Activated CD4-positive, alpha-beta T cell treated with anti-CD3 and anti-CD28 coated beads for 36 hours (primary cell): ENCODE measurements at regions of chrX and their contacts with region 1.

Region 1: DNA sequence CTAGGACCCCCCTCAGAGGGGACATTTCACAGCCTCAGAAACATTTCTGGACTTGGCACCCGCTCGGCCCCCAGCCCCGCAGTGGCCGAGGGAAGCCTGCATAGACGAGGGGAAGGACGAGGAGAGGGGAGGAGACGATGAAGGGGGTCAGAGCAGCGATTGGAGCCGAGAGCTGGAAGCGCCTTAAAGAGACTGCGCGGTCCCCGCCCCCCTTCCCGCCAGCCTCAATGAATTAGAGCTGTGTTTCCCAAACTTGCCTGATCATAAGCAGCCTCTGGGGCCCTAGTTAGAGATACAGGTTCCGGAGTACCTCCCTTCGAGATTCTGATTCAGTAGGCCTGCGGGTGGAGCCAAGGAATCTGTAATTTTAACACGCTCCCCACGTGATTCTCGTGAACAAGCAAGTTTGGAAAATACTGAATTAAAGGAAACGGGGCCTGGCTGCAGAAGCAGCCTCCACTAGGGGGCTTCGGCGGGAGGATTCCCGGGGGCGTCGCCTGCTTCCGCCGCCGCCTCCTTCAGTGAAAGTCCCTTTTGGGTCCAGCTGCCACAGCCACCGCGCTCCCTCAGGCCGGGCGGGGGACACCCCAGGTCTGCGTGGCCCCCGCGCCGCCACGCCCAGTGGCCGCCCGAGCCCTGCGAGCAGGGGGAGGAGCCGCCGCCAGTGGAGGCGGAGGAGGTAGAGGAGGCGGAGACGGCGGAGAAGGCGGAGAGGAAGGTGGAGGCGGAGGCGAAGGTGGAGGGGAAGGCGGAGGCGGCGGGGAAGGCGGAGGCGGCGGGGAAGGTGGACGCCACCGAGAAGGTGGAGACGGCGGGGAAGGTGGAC is at the start of gene USP27X:
- DNase-seq: peak; percentile 79
- ATAC-seq: peak; percentile 83
- H3K4me3 Mint-ChIP-seq: peak within 1 kb of the TSS; percentile 74
- H3K27ac Mint-ChIP-seq: peak within 1 kb of the TSS; percentile 76
- H3K4me1 Mint-ChIP-seq: peaks cover 28% of the 10 kb centered on the region
- H3K27me3 Mint-ChIP-seq: no peaks in the 10 kb centered on the region
- total RNA-seq, gene USP27X: 2.2 TPM

Region 2: DNA sequence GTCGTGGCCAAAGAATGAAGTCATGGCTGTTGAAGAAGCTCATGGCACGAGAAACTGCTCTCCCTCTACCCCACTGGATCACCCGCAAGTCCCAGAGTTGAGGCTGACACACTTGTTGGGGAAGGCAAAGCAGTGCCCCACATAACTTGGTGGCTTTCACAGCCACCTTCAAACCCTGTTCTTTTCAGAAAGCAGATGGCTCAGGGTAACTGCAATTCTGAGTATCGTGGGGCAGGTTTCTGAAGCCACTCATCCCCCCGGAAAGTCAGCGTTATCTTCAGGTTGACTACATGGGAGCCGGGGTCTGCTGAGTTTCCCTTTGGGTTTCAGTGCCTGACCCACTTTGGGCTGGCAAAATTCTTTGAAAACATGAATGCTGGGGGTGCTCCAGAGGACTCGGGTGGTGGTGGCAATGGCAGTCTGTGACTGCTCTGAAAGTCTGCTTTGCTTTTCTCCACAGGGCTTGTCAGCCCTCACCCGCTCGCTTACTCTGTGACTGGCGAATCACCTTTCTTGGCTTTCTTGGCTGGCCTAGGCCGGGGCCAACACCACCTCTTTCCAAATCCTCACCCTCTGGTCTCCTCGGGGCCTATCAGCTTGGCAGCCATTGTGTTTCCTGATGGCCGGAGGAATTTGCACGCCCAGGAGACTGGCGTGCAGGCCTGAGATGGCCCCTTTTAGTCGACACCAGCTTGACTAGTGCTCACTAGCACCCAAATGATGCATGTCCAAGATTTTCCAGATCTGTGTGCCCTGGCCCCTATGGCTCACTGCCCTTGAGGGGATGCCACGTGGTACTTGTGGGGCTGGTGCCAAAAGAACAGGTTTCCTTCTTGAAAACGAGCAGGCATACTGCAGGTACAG is 602.1 kb before region 1 on chrX:
- CTCF ChIA-PET with region 1: no interaction called
- POLR2A ChIA-PET with region 1: no interaction called
- intact Hi-C with region 1: loop called in 1 of 2 experiments (anchors 5 kb)
- DNase-seq: peak; percentile 61
- ATAC-seq: peak; percentile 36
- H3K4me3 Mint-ChIP-seq: peak overlapping the region; percentile 47
- H3K27ac Mint-ChIP-seq: peak overlapping the region; percentile 94
- H3K4me1 Mint-ChIP-seq: peaks cover 80% of the 10 kb centered on the region
- H3K27me3 Mint-ChIP-seq: no peaks in the 10 kb centered on the region

Region 3: GRCh38 chrX:49761481-49761880 is 117.6 kb before region 1 on chrX:
- CTCF ChIA-PET with region 1: interaction called, 3 read pairs
- POLR2A ChIA-PET with region 1: no interaction called
- intact Hi-C with region 1: loop called in 1 of 2 experiments (anchors 1 kb)
- DNase-seq: peak; percentile 4
- ATAC-seq: no peak
- H3K4me3 Mint-ChIP-seq: no peak overlapping the region
- H3K27ac Mint-ChIP-seq: no peak overlapping the region
- H3K4me1 Mint-ChIP-seq: no peaks in the 10 kb centered on the region
- H3K27me3 Mint-ChIP-seq: no peaks in the 10 kb centered on the region

Region 4: GRCh38 chrX:49840679-49841078 is 38.4 kb before region 1 on chrX:
- CTCF ChIA-PET with region 1: interaction called, 5 read pairs
- POLR2A ChIA-PET with region 1: no interaction called
- intact Hi-C with region 1: loop called (anchors 1 to 2 kb)
- DNase-seq: peak; percentile 77
- ATAC-seq: peak; percentile 81
- H3K4me3 Mint-ChIP-seq: no peak overlapping the region
- H3K27ac Mint-ChIP-seq: no peak overlapping the region
- H3K4me1 Mint-ChIP-seq: peaks cover 5% of the 10 kb centered on the region
- H3K27me3 Mint-ChIP-seq: no peaks in the 10 kb centered on the region

Region 5: DNA sequence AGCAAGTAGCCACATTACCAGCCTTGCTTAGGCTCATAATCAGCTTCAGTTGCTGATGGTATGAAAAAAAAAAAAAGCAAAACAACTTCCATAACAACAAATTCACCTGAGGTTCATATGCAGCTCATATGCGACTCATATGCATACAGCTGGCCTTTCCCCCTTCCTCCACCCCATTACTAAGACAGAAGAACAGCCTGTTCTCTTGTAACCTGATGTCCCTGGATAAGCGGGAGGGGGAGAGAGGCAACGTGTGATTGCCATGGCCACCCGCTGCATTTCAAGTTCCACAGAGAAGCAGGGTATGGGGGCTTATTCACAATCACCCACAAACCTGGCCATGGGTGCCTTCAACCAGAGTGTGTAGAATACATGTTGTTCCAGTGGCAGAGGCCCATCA is 686.7 kb after region 1 on chrX:
- CTCF ChIA-PET with region 1: no interaction called
- POLR2A ChIA-PET with region 1: no interaction called
- intact Hi-C with region 1: no loop called
- DNase-seq: no peak
- ATAC-seq: no peak
- H3K4me3 Mint-ChIP-seq: no peak overlapping the region
- H3K27ac Mint-ChIP-seq: no peak overlapping the region
- H3K4me1 Mint-ChIP-seq: no peaks in the 10 kb centered on the region
- H3K27me3 Mint-ChIP-seq: peaks cover under 1% of the 10 kb centered on the region